MCF 10A (cell line): ENCODE measurements at regions of chr4 and their contacts with region 1.

Region 1: GRCh38 chr4:165502919-165503907 is 124.4 kb downstream of the CPE start:
- DNase-seq: peak; percentile 44
- H3K4me3 Mint-ChIP-seq: peak overlapping the region; percentile 2
- H3K27ac Mint-ChIP-seq: peak overlapping the region; percentile 71
- H3K4me1 Mint-ChIP-seq: peaks cover 37% of the 10 kb centered on the region
- H3K27me3 Mint-ChIP-seq: no peaks in the 10 kb centered on the region
- CTCF ChIP-seq: no peak

Region 2: GRCh38 chr4:165415910-165416309 is 87.3 kb before region 1 on chr4:
- CTCF ChIA-PET with region 1: no interaction called
- POLR2A ChIA-PET with region 1: no interaction called
- intact Hi-C with region 1: no loop called
- DNase-seq: no peak
- H3K4me3 Mint-ChIP-seq: no peak overlapping the region
- H3K27ac Mint-ChIP-seq: no peak overlapping the region
- H3K4me1 Mint-ChIP-seq: peaks cover 6% of the 10 kb centered on the region
- H3K27me3 Mint-ChIP-seq: no peaks in the 10 kb centered on the region
- CTCF ChIP-seq: no peak

Region 3: GRCh38 chr4:165516281-165516833 is 13.1 kb after region 1 on chr4:
- CTCF ChIA-PET with region 1: interaction called, 5 read pairs
- POLR2A ChIA-PET with region 1: interaction called, 13 read pairs
- intact Hi-C with region 1: no loop called
- DNase-seq: no peak
- H3K4me3 Mint-ChIP-seq: no peak overlapping the region
- H3K27ac Mint-ChIP-seq: no peak overlapping the region
- H3K4me1 Mint-ChIP-seq: peaks cover 11% of the 10 kb centered on the region
- H3K27me3 Mint-ChIP-seq: no peaks in the 10 kb centered on the region
- CTCF ChIP-seq: no peak

Region 4: GRCh38 chr4:165709973-165710526 is 206.8 kb after region 1 on chr4:
- CTCF ChIA-PET with region 1: no interaction called
- POLR2A ChIA-PET with region 1: no interaction called
- intact Hi-C with region 1: no loop called
- DNase-seq: no peak
- H3K4me3 Mint-ChIP-seq: no peak overlapping the region
- H3K27ac Mint-ChIP-seq: peak overlapping the region; percentile 6
- H3K4me1 Mint-ChIP-seq: peaks cover 15% of the 10 kb centered on the region
- H3K27me3 Mint-ChIP-seq: no peaks in the 10 kb centered on the region
- CTCF ChIP-seq: no peak